Esophagus muscularis mucosa (tissue), 4 donors: ENCODE measurements at regions of chr13 and their contacts with region 1.

Region 1: DNA sequence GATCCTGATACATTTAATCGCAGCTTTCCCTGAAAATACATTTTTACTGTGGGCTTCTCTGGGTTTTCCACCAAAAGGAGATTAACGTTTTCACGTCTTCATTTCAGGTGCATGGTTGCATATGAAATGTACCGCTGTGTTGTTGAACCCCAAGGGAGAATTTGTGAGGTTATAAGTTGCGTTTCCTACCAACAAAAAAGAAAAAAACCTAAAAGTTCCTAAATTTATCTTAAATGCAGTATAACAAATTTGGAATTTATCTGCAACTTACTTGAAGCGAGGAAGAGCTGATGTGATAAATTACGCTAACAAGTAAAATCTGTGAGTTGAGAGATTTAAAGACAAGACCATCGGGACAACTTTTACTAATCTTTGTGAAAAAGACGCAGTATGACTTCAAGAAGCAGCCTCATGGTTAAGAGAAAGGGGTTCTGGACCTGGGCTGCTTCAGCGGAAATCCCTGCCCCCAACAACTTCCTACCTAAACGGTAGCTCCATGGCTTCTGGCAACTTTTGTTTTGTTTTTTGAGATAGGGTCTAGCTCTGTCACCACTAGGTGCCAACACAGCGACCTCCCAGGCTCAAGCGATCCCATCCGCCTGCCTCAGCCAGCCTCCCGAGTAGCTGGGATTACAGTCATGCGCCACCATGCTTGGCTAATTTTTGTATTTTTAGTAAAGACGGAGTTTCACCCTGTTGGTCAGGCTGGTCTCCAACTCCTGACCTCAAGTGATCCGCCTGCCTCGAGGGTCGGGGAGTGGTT is 958 bp upstream of the OBI1 start:
- DNase-seq: no peak
- H3K4me3 ChIP-seq: peak overlapping the region; percentile 73 to 98 (median 93)
- H3K27ac ChIP-seq: peak overlapping the region in 2 of 4 donors; percentile 80 to 81
- H3K4me1 ChIP-seq: peaks cover 15 to 34% (median 25%) of the 10 kb centered on the region in 4 donors
- H3K27me3 ChIP-seq: no peaks in the 10 kb centered on the region
- CTCF ChIP-seq: no peak
- EP300 ChIP-seq: no peak
- POLR2A ChIP-seq: no peak

Region 2: GRCh38 chr13:78609464-78610205 is 50.3 kb before region 1 on chr13:
- intact Hi-C with region 1: loop called (anchors 5 kb)
- DNase-seq: no peak
- H3K4me3 ChIP-seq: peak overlapping the region; percentile 49 to 59 (median 54)
- H3K27ac ChIP-seq: no peak overlapping the region
- H3K4me1 ChIP-seq: peaks cover 25 to 37% (median 33%) of the 10 kb centered on the region in 4 donors
- H3K27me3 ChIP-seq: peaks cover 0 to 66% (median 52%) of the 10 kb centered on the region in 4 donors
- CTCF ChIP-seq: no peak
- EP300 ChIP-seq: no peak
- POLR2A ChIP-seq: no peak

Region 3: GRCh38 chr13:78700121-78700910 is 40.4 kb after region 1 on chr13:
- intact Hi-C with region 1: no loop called
- DNase-seq: no peak
- H3K4me3 ChIP-seq: no peak overlapping the region
- H3K27ac ChIP-seq: no peak overlapping the region
- H3K4me1 ChIP-seq: no peaks in the 10 kb centered on the region
- H3K27me3 ChIP-seq: peaks cover 0 to 5% (median 0%) of the 10 kb centered on the region in 4 donors
- CTCF ChIP-seq: no peak
- EP300 ChIP-seq: no peak
- POLR2A ChIP-seq: no peak

Region 4: GRCh38 chr13:79090552-79091124 is 430.7 kb after region 1 on chr13:
- intact Hi-C with region 1: no loop called
- DNase-seq: no peak
- H3K4me3 ChIP-seq: no peak overlapping the region
- H3K27ac ChIP-seq: no peak overlapping the region
- H3K4me1 ChIP-seq: no peaks in the 10 kb centered on the region
- H3K27me3 ChIP-seq: no peaks in the 10 kb centered on the region
- CTCF ChIP-seq: no peak
- EP300 ChIP-seq: no peak
- POLR2A ChIP-seq: no peak